Sciatic nerve (tissue), 2 donors: ENCODE measurements at regions of chr16 and their contacts with region 1.

Region 1: GRCh38 chr16:66977341-66978113 is 10.9 kb upstream of the CES4A start:
- DNase-seq: peak; percentile 95
- ATAC-seq: peak; percentile 97

Region 2: GRCh38 chr16:67155295-67156142 is 178.0 kb after region 1 on chr16:
- intact Hi-C with region 1: loop called (anchors 2 kb)
- DNase-seq: peak; percentile 86
- ATAC-seq: peak; percentile 56